ENCODE measurements at regions of chr12 and their contacts with region 1.

Region 1: GRCh38 chr12:28065889-28066630 is 93.5 kb upstream of the PTHLH start:
- DNase-seq: no peak
- H3K4me3 ChIP-seq: no peak overlapping the region
- H3K27ac ChIP-seq: no peak overlapping the region
- H3K4me1 ChIP-seq: peaks cover 14% of the 10 kb centered on the region
- H3K27me3 ChIP-seq: no peaks in the 10 kb centered on the region
- CTCF ChIP-seq: no peak
- POLR2A ChIP-seq: no peak

Region 2: DNA sequence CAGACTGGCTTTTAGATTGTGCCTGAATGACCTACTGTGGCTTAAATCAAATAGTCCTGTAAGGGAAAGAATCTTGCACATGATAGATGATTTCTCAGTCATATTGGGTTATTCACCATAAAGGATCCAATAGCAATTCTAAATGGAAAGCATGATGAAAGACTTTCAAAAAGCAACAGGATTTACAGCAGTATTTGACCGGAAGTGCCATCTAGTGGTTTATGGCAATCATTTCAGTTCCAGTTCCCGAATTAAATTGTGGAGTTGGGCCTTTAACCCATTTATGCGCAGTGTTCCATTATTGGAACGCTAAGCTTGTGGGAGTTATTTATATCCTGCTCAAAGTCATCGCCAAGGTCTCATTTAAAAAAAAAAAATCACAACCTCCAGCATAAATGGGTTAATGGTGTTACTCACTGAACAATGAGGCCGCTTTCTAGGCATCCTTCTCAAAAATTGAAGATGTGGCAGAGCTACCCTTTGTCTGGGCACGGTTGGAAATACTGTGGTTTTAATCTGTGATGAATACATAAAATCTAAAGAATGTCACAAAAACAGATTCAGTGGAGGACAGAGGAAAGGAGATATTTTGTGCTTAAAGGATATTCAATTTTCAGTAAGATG is 430.6 kb before region 1 on chr12:
- CTCF ChIA-PET with region 1: no interaction called
- POLR2A ChIA-PET with region 1: no interaction called
- dilution Hi-C with region 1: no loop called
- intact Hi-C with region 1: no loop called
- DNase-seq: peak; percentile 61
- H3K4me3 ChIP-seq: no peak overlapping the region
- H3K27ac ChIP-seq: no peak overlapping the region
- H3K4me1 ChIP-seq: peaks cover 19% of the 10 kb centered on the region
- H3K27me3 ChIP-seq: no peaks in the 10 kb centered on the region
- CTCF ChIP-seq: peak; percentile 28 to 39
- POLR2A ChIP-seq: no peak

Region 3: DNA sequence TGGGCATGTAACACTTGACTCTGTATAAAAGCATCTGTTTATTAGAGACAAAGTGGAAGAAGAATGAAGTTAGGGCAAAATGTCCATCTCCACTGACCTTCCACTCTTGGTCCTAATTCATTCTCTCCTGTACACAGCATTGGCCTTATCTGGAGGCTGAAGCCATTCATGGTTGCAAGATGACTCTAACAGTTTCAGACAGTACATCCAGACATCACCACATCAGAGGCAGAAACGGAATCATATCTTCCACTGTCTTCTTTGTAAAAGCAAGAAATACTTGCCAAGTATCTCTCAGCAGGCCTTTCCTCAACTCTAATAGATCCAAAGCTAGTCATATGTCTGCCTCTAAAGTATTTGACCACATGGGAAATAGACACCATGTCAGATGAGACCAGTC is 134.7 kb before region 1 on chr12:
- CTCF ChIA-PET with region 1: no interaction called
- POLR2A ChIA-PET with region 1: no interaction called
- dilution Hi-C with region 1: no loop called
- intact Hi-C with region 1: no loop called
- DNase-seq: no peak
- H3K4me3 ChIP-seq: no peak overlapping the region
- H3K27ac ChIP-seq: no peak overlapping the region
- H3K4me1 ChIP-seq: no peaks in the 10 kb centered on the region
- H3K27me3 ChIP-seq: no peaks in the 10 kb centered on the region
- CTCF ChIP-seq: no peak
- POLR2A ChIP-seq: no peak

Region 4: DNA sequence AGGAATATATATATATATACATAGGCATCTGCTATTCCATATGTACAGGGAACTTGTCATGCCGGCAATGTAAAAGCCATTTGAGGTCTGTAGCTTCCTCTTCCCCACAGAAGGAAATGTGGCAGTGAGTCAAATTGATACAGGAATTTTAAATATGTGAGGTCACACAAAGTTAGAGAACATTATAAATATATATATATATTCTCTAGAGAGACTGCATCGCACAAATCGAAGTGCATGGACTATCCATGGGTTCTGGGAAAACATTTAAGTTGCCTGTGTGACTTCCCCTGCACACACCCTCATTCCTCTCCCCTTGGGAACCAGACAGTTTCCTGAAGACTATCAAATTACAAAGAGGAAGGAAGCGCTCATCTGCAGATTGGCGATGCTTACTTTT is 23.3 kb after region 1 on chr12:
- CTCF ChIA-PET with region 1: no interaction called
- POLR2A ChIA-PET with region 1: no interaction called
- dilution Hi-C with region 1: no loop called
- intact Hi-C with region 1: loop called (anchors 2 kb)
- DNase-seq: peak; percentile 37
- H3K4me3 ChIP-seq: no peak overlapping the region
- H3K27ac ChIP-seq: no peak overlapping the region
- H3K4me1 ChIP-seq: peaks cover 20% of the 10 kb centered on the region
- H3K27me3 ChIP-seq: no peaks in the 10 kb centered on the region
- CTCF ChIP-seq: no peak
- POLR2A ChIP-seq: no peak

Region 5: DNA sequence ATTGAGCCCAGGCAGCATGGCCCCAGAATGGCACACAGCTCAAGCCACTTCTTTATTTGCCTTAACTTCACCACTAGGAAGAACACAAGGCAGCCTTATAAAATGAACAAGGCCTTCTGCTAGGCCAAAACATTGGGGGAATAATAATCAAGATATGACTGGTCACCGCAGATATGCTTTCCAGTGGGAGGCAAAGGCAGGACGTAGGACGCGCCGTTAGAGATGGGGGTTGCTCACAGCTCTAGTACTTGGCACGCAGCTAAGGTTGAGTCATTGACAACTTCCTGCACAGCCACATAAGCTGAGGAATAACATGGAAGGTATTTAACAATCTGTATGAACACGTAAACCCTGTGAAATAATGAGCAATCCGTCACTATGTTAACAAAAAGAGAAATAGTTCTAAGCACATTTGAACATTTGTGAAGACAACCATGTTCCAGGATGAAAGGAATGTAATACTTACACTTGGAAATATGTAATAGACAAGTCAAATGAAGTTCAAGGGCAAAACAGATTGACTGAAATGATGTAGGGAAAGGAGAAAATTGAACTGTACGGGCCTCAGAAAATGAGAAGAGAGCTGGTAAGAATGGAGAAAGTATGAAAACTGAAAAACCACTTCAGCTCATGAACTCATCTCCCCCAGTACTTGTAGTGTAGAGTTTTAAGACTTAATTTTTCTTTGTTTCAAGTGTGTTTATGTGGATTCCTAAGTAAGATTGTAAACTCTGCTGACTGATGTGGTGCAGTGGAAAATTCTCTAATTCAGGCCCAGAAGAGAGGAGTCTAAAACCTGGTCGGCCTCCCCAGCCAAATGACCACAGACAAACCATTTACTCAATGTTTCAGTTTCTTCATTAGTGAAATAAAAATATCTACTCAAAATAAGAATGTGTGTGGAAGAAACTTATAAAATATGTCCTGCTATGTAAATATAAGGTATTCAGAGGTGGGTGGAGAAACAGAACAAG is 64.9 kb after region 1 on chr12:
- CTCF ChIA-PET with region 1: interaction called, 3 read pairs
- POLR2A ChIA-PET with region 1: no interaction called
- dilution Hi-C with region 1: no loop called
- intact Hi-C with region 1: loop called (anchors 2 kb)
- DNase-seq: peak; percentile 99
- H3K4me3 ChIP-seq: no peak overlapping the region
- H3K27ac ChIP-seq: peak overlapping the region; percentile 84
- H3K4me1 ChIP-seq: peaks cover 21% of the 10 kb centered on the region
- H3K27me3 ChIP-seq: no peaks in the 10 kb centered on the region
- CTCF ChIP-seq: no peak
- POLR2A ChIP-seq: no peak

Region 6: GRCh38 chr12:28497889-28498411 is 431.9 kb after region 1 on chr12:
- CTCF ChIA-PET with region 1: no interaction called
- POLR2A ChIA-PET with region 1: no interaction called
- dilution Hi-C with region 1: no loop called
- intact Hi-C with region 1: no loop called
- DNase-seq: peak; percentile 56
- H3K4me3 ChIP-seq: no peak overlapping the region
- H3K27ac ChIP-seq: no peak overlapping the region
- H3K4me1 ChIP-seq: peaks cover 7% of the 10 kb centered on the region
- H3K27me3 ChIP-seq: no peaks in the 10 kb centered on the region
- CTCF ChIP-seq: no peak
- POLR2A ChIP-seq: no peak

Measured in endothelial cell of umbilical vein (primary cell).